ENCODE measurements at regions of chr5 and their contacts with region 1.

Region 1: GRCh38 chr5:159444441-159445082 is 114.3 kb upstream of the IL12B start:
- DNase-seq: peak; percentile 78
- ATAC-seq: peak; percentile 76
- H3K4me3 ChIP-seq: no peak overlapping the region
- H3K27ac ChIP-seq: no peak overlapping the region
- H3K4me1 ChIP-seq: peaks cover 5% of the 10 kb centered on the region
- H3K27me3 ChIP-seq: no peaks in the 10 kb centered on the region
- CTCF ChIP-seq: peak; percentile 68

Region 2: GRCh38 chr5:159156426-159157238 is 287.9 kb before region 1 on chr5:
- CTCF ChIA-PET with region 1: no interaction called
- POLR2A ChIA-PET with region 1: no interaction called
- intact Hi-C with region 1: loop called (anchors 5 kb)
- DNase-seq: peak; percentile 73
- ATAC-seq: peak; percentile 85
- H3K4me3 ChIP-seq: no peak overlapping the region
- H3K27ac ChIP-seq: no peak overlapping the region
- H3K4me1 ChIP-seq: no peaks in the 10 kb centered on the region
- H3K27me3 ChIP-seq: no peaks in the 10 kb centered on the region
- CTCF ChIP-seq: peak; percentile 80

Region 3: DNA sequence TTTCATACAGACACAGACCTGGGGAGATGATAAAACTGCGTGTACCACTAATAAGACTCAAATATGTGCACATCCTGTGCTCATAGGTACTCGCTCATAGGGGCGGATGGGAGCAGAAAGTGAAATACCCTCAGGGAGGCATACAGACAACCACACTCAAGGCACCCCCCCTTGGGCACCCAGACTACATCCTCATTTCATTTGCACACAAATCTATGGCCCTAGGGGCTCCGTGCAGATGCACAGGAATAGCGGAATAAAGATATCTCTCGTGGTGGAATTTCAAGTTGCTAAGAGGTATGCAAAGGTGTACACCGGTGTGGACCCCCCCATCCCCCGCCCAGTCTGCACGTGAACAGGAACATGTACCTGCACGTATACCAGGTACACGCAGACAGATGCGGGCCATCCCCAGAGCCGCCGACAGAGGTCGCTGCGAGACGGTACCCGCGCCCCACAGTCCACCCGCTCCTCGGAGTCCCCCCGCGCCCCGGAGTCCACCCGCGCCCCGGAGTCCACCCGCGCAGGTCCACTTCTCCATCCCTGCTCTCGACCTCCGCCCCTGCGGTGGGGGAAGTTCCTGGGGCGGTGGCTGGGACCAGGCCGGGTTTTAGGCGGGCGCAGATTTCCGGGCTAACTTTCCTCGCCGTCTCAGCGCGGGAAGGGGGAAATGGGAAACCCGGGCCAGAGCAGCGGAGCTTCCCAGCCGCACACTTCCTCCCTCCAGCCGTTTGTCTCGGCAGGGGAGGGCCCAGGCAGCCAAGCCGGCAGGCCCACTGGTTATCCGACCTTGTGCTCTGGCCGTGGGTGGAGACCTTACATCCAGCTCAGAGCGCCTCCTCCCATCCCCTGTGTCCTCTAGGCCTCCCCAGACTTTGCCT is 113.2 kb before region 1 on chr5:
- CTCF ChIA-PET with region 1: no interaction called
- POLR2A ChIA-PET with region 1: no interaction called
- intact Hi-C with region 1: loop called (anchors 5 kb)
- DNase-seq: peak; percentile 58
- ATAC-seq: peak; percentile 87
- H3K4me3 ChIP-seq: peak overlapping the region; percentile 72
- H3K27ac ChIP-seq: 0 out of 2 replicates have a peak overlapping the region, but pooled peaks have one; percentile 19
- H3K4me1 ChIP-seq: peaks cover 3% of the 10 kb centered on the region; the same call in 1 of the 2 replicates
- H3K27me3 ChIP-seq: no peaks in the 10 kb centered on the region
- CTCF ChIP-seq: peak; percentile 65

Region 4: GRCh38 chr5:159581502-159582249 is 137.1 kb after region 1 on chr5:
- CTCF ChIA-PET with region 1: no interaction called
- POLR2A ChIA-PET with region 1: no interaction called
- intact Hi-C with region 1: loop called (anchors 2 kb)
- DNase-seq: peak; percentile 95
- ATAC-seq: peak; percentile 73
- H3K4me3 ChIP-seq: no peak overlapping the region
- H3K27ac ChIP-seq: peak overlapping the region; percentile 80
- H3K4me1 ChIP-seq: peaks cover 31% of the 10 kb centered on the region
- H3K27me3 ChIP-seq: no peaks in the 10 kb centered on the region
- CTCF ChIP-seq: peak; percentile 26; the same call in 1 of the 2 replicates

Region 5: DNA sequence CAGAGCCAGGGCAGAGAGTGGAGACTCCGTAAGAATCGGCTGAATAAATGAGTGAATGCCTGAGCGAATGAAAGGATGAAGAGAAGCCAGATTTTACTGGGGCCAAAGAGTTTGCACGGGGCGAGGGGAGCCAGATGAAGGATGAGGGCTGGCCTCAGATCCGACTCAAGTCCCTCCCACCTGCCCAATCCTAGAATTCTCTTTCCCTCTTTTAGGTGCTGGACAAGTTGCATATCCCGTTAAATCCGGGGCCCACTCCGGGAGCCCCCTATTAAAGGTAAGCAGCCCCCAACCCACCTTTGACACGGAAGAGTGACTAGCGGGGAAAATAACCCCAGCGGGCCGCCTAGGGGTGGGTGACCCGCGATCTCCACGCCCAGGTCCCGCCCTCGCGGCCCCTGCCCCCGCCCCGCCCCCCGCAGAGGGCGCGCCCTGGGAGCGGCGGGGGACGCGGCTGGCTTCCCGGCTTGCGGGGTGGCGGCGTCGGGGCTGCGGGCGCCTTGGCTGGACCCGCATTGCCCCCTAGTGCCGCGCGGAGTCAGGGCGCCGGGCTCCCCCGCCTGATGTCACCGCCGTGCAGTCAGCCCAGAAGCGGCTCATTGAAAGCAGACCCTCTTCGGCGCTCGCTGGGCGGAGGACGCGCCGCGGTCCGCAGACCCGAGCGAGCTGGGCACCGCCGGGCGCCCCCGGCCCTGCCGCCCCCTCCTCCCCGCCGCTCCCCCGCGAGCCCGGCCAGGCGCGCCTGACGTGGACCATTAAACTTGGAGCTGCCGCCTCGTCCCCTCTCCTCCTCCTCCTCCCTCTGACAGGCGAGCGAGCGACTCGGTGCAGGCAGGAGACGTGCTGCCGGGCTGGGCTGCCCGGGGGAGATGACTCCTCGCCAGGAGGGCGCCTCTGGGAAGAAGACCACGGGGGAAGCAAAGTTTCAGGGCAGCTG is 471.6 kb after region 1 on chr5 and contains the start of gene ADRA1B:
- CTCF ChIA-PET with region 1: no interaction called
- POLR2A ChIA-PET with region 1: no interaction called
- intact Hi-C with region 1: loop called (anchors 1 kb)
- DNase-seq: peak; percentile 68
- ATAC-seq: peak; percentile 90
- H3K4me3 ChIP-seq: peak within 1 kb of the TSS; percentile 68
- H3K27ac ChIP-seq: no peak within 1 kb of the TSS
- H3K4me1 ChIP-seq: peaks cover 34% of the 10 kb centered on the region
- H3K27me3 ChIP-seq: no peaks in the 10 kb centered on the region
- CTCF ChIP-seq: peak; percentile 53
- total RNA-seq, gene ADRA1B: 0.29 and 0.40 TPM in 2 replicates